ENCODE measurements at regions of chrX and their contacts with region 1.

Region 1: DNA sequence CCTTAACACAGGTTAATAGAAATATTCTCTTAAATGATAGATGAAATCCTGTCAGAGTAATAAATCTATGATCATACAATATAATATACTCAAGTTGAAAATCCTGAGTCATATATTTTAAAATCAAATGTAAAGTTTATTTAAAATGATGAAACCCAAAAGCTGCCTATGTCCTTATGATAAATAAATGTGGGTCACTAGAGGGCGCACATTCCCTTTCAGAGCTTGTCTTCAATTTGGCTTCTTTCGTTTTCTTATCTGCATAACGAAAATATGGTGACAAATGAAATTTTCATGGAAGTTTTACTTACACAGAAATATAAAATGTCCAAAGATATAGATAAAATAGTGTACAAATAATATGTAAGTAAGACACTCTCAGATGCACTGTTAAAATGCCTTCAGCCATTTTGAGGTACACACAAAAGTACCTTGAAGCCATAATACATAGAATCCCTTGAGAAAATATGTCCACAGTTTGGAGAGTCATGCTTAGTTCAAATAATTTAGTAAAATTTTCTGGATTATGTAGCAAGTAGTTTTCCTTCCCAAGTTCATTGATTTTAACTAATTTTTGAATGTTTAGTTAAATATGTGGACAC is 680.4 kb downstream of the DMD start:
- DNase-seq: no peak
- ATAC-seq: no peak

Region 2: DNA sequence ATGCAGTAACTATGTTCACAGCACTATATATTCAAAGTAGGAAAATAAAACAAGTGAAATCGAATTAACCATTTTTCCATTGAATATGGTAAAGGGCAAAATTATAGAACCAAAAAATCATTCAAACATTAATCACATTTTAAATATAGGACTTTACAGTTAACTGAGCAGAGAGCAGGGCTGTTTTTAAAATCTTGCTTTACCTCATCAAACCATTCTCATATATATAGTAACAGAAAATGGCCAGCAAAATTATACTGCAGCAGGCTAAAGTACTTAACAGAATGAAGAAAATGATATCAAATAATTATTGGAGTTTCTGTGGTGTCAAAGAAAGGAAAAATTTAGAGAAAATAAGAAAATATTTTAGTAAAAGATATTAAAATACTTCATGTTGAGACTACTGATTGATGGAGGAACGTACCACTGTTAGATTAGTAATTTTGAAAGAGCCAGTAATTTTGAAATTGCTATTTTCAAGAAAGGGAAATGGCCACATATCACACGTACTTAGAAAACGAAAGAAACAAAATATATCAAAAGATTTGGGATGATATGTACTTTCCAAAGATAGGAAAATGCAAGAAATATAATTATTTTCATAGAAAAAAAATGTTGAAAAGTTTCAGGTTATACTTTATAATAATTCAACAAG is 133.2 kb before region 1 on chrX:
- intact Hi-C with region 1: no loop called
- DNase-seq: no peak
- ATAC-seq: no peak

Region 3: DNA sequence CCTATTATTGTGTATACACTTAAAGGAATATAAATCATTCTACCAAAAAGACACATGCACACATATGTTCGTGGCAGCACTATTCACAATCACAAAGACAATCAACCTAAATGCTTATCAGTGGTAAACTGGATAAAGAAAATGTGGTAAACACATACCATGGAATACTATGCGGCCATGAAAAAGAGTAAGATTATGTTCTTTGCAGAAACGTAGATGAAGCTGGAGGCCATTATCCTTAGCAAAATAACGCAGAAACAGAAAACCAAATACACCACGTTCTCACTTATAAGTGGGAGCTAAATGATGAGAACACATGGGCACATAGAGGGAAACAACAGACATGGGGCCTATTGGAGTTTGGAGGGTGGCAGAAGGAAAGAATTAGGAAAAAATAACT is 87.3 kb after region 1 on chrX:
- intact Hi-C with region 1: no loop called
- DNase-seq: no peak
- ATAC-seq: no peak

Region 4: GRCh38 chrX:33336783-33337182 is 805.9 kb after region 1 on chrX:
- intact Hi-C with region 1: loop called (anchors 5 kb)
- DNase-seq: no peak
- ATAC-seq: no peak

Measured in Right ventricle myocardium inferior (tissue), 1 donor.